ENCODE measurements at regions of chr5 and their contacts with region 1.

Region 1: DNA sequence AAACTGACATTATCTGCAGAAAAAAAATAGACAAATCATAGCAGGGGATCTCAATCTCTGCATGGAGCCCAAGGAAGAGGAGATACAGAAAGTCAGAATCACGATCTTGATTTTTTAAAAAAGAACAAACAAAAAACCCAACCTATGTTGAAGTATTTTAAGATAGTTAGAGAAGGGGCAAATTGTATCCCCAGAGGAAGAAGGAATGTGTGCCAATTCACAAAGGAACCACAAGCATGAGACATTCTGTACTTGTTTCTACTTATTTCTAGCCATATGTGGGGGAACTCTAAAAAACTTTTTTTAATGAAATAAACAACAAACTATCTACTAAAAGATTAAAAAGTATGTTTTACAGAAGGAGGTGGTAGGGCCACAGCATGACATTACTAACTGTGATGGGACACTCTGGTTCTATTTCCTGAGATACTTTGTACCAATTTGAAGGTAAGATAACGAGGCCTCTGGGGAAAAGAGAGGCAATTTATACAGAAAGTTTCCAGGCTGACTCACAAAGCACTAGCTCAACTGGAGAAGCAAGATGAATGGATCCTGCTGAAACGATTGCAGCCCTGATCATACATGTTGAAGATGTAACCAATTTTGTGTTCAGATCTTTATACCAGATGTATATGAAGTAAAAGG is 22.5 kb downstream of the RANBP3L start:
- DNase-seq: no peak
- H3K4me3 Mint-ChIP-seq: no peak overlapping the region
- H3K27ac Mint-ChIP-seq: no peak overlapping the region
- H3K4me1 Mint-ChIP-seq: peaks cover 2% of the 10 kb centered on the region
- H3K27me3 Mint-ChIP-seq: peaks cover 19% of the 10 kb centered on the region

Region 2: DNA sequence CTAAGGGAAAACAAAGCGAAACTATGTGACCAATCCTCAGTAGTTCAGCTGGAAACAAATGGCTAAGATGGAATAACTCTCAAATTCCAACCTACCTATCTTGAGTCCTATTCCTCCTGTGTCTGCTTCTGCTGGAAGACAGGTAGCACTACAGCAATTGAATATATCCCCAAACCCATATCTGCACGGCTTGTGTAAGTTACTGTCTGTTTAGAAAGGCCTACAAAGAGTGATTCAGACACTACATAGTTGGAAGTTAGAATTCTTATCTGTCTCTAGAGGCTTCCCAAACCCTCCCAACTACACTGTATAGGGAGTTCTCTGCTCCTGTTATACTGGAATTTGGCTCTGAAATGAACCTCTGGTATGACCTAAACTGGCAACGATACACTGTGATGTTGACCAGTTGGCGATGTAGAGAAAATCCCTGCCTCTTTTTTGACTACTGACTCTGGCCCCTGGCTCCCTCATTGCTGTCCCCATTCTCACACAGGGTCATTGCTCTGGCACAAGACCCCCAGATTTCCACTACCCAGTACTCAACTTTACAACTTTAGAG is 14.9 kb before region 1 on chr5:
- intact Hi-C with region 1: no loop called
- DNase-seq: no peak
- H3K4me3 Mint-ChIP-seq: no peak overlapping the region
- H3K27ac Mint-ChIP-seq: no peak overlapping the region
- H3K4me1 Mint-ChIP-seq: no peaks in the 10 kb centered on the region
- H3K27me3 Mint-ChIP-seq: peaks cover 14% of the 10 kb centered on the region

Region 3: DNA sequence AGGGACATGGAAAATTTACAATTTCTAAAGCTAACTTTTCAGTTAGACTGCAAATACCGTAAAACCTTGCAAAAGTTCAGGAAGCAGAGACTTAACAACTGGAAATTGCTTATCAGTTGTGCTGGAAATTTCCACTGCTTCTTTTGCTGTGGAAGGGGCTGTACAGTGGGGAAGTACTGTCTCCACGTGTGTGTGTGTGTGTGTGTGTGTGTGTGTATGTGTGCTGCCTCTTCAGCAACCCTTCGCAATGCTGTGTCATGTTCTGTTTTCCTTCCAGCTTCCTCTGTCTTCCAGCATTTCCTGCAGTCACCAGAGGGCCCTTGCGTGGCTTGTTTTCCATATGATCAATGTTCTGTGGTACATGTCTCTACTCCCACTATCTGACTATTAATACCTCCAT is 110.1 kb after region 1 on chr5:
- intact Hi-C with region 1: loop called (anchors 10 kb)
- DNase-seq: no peak
- H3K4me3 Mint-ChIP-seq: no peak overlapping the region
- H3K27ac Mint-ChIP-seq: no peak overlapping the region
- H3K4me1 Mint-ChIP-seq: no peaks in the 10 kb centered on the region
- H3K27me3 Mint-ChIP-seq: peaks cover 4% of the 10 kb centered on the region

Measured in activated T-helper 2 cell treated with anti-CD3 and anti-CD28 coated beads, Interferon-gamma antibody, Interleukin-2, Interleukin-4, amounts not matched to agents 10 μg/mL and 5 μg/mL and 100 μg/mL, durations not matched to agents 14 hours and 24 hours and 36 hours (primary cell).